B cell (primary cell): ENCODE measurements at regions of chr16 and their contacts with region 1.

Region 1: GRCh38 chr16:71412270-71413160 is 29.3 kb downstream of the TLE7 start:
- DNase-seq: peak; percentile 80
- ATAC-seq: peak; percentile 73
- H3K4me3 ChIP-seq: no peak overlapping the region
- H3K4me3 Mint-ChIP-seq: no peak overlapping the region
- H3K27ac ChIP-seq: no peak overlapping the region
- H3K27ac Mint-ChIP-seq: no peak overlapping the region
- H3K4me1 ChIP-seq: peaks cover 6 to 12% of the 10 kb centered on the region in 2 donors
- H3K4me1 Mint-ChIP-seq: peaks cover 7% of the 10 kb centered on the region
- H3K27me3 ChIP-seq: peaks cover 0 to 12% (median 2%) of the 10 kb centered on the region in 4 experiments
- H3K27me3 Mint-ChIP-seq: peaks cover 45% of the 10 kb centered on the region
- CTCF ChIP-seq: peak; percentile 89

Region 2: DNA sequence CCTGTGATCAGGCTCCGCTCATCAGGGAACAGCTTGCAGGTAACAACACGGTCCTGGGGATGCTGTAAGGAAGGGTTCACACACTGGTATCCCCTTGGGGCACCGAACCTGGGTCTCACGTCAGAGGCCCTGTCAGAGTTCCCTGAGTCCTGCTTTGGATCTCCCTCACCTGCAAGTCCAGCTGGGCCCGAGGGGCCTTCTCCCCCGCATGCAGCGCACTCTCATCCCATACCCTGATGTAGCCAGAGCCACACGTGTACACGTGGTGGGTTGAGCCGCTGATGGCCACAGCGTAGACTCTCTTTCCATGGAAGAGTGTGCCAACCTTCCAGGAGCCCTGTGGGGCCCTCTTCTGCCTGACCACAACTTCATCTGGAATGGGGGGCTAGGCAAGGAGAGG is 19.4 kb after region 1 on chr16:
- CTCF ChIA-PET with region 1: interaction called, 20 read pairs
- POLR2A ChIA-PET with region 1: no interaction called
- intact Hi-C with region 1: no loop called
- DNase-seq: no peak
- ATAC-seq: no peak
- H3K4me3 ChIP-seq: no peak overlapping the region
- H3K4me3 Mint-ChIP-seq: no peak overlapping the region
- H3K27ac ChIP-seq: no peak overlapping the region
- H3K27ac Mint-ChIP-seq: no peak overlapping the region
- H3K4me1 ChIP-seq: no peaks in the 10 kb centered on the region
- H3K4me1 Mint-ChIP-seq: no peaks in the 10 kb centered on the region
- H3K27me3 ChIP-seq: peaks cover 0 to 17% (median 3%) of the 10 kb centered on the region in 4 experiments
- H3K27me3 Mint-ChIP-seq: peaks cover 44% of the 10 kb centered on the region
- CTCF ChIP-seq: no peak

Region 3: GRCh38 chr16:71461686-71462648 is 49.5 kb after region 1 on chr16 and contains the start of gene ZNF23:
- CTCF ChIA-PET with region 1: interaction called, 4 read pairs
- POLR2A ChIA-PET with region 1: no interaction called
- intact Hi-C with region 1: loop called (anchors 1 kb)
- DNase-seq: peak; percentile 91
- ATAC-seq: peak; percentile 97
- H3K4me3 ChIP-seq: peak within 1 kb of the TSS; percentile 62 to 99 (median 96)
- H3K4me3 Mint-ChIP-seq: peak within 1 kb of the TSS; percentile 96
- H3K27ac ChIP-seq: peak within 1 kb of the TSS; percentile 91 to 95
- H3K27ac Mint-ChIP-seq: peak within 1 kb of the TSS; percentile 95
- H3K4me1 ChIP-seq: peaks cover 14 to 16% of the 10 kb centered on the region in 2 donors
- H3K4me1 Mint-ChIP-seq: peaks cover 32% of the 10 kb centered on the region
- H3K27me3 ChIP-seq: no peaks in the 10 kb centered on the region
- H3K27me3 Mint-ChIP-seq: no peaks in the 10 kb centered on the region
- CTCF ChIP-seq: peak; percentile 36
- total RNA-seq, gene ZNF23: 15.0 and 18.3 TPM in 2 replicates

Region 4: DNA sequence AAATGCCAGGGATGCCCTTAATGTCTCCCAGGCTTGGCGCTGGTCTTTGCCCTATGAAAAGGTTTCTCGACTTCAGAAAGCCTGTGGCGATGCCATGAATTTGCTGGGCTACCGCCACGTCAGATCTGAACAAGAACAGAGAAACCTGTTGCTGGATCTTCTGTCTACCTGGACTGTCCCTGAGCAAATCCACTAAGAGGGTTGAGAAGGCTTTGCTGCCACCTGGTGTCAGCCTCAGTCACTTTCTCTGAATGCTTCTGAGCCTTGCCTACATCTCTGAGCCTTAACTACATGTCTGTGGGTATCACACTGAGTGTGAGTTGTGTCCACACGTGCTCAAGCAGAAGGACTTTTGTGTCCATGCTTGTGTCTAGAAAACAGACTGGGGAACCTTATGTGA is 125.1 kb after region 1 on chr16:
- CTCF ChIA-PET with region 1: interaction called, 10 read pairs
- POLR2A ChIA-PET with region 1: no interaction called
- intact Hi-C with region 1: no loop called
- DNase-seq: peak; percentile 64
- ATAC-seq: peak; percentile 73
- H3K4me3 ChIP-seq: no peak overlapping the region
- H3K4me3 Mint-ChIP-seq: no peak overlapping the region
- H3K27ac ChIP-seq: no peak overlapping the region
- H3K27ac Mint-ChIP-seq: no peak overlapping the region
- H3K4me1 ChIP-seq: peaks cover 13 to 15% of the 10 kb centered on the region in 2 donors
- H3K4me1 Mint-ChIP-seq: peaks cover 15% of the 10 kb centered on the region
- H3K27me3 ChIP-seq: peaks cover 0 to 7% (median 2%) of the 10 kb centered on the region in 4 experiments
- H3K27me3 Mint-ChIP-seq: peaks cover 13% of the 10 kb centered on the region
- CTCF ChIP-seq: peak; percentile 80